PC-3 (cell line): ENCODE measurements at regions of chr9 and their contacts with region 1.

Region 1: GRCh38 chr9:72526901-72527800 is 5.7 kb downstream of the TMC1 start:
- DNase-seq: peak; percentile 84
- ATAC-seq: peak; percentile 74
- H3K4me3 ChIP-seq: peak overlapping the region; percentile 50
- H3K27ac ChIP-seq: peak overlapping the region; percentile 73
- H3K4me1 ChIP-seq: peaks cover 39% of the 10 kb centered on the region
- H3K27me3 ChIP-seq: no peaks in the 10 kb centered on the region
- CTCF ChIP-seq: no peak

Region 2: DNA sequence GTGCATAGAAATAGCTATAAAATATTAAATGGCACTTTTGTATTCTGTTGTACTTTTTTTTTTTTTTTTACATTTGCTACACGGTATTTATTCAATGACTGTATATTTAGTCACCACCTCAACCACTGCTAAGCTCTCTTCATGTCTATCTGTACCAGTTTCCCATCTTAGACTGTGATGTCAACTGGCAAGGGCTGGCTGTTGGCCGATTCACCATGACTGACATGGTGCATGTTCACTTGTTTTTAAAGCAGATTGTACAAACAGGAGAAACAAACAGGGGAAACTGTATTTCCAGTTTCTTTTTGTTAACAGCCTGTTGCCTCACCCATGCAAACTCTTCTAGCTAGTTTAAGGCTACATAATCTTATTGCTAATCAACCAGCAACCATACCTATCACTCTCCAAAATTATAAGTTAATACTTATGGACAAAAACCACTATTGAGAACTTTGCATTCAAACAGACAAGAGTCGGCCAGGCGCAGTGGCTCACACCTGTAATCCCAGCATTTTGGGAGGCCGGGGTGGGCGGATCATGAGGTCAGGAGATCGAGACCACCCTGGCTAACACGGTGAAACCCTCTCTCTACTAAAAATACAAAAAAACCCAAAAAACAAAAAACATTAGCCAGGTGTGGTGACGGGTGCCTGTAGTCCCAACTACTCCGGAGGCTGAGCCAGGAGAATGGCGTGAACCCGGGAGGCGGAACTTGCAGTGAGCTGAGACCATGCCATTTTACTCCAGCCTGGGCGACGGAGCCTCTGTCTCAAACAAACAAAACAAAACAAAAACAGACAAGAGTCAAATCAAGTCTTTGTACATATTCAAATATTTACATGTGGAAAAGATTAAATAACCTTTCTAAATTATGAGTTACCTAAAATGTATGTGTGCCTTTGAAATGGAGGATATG is 175.4 kb before region 1 on chr9:
- CTCF ChIA-PET with region 1: no interaction called
- POLR2A ChIA-PET with region 1: interaction called, 11 read pairs
- intact Hi-C with region 1: no loop called
- DNase-seq: peak; percentile 84
- ATAC-seq: peak; percentile 99
- H3K4me3 ChIP-seq: no peak overlapping the region
- H3K27ac ChIP-seq: peak overlapping the region; percentile 39
- H3K4me1 ChIP-seq: peaks cover 20% of the 10 kb centered on the region
- H3K27me3 ChIP-seq: no peaks in the 10 kb centered on the region
- CTCF ChIP-seq: no peak

Region 3: DNA sequence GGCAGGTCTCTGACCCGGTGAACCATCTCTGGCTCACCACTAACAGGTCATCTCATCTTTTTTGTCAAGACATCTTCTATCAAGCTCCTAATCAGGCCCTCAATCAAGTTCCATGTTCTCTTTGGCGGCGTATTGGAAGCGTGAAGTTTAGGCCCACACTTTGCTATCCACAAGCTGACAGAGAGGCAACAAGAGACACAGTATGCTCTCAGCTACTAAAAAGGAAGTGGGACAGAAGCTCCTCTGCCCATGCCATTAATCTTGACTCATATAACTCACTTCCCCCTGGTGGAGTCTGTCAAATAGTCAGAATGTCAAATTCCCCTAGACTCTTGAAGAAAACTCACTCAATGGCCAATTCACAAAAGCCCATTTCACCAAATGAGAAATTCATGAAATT is 83.3 kb before region 1 on chr9:
- CTCF ChIA-PET with region 1: no interaction called
- POLR2A ChIA-PET with region 1: no interaction called
- intact Hi-C with region 1: loop called (anchors 1 kb)
- DNase-seq: peak; percentile 57
- ATAC-seq: peak; percentile 41
- H3K4me3 ChIP-seq: no peak overlapping the region
- H3K27ac ChIP-seq: peak overlapping the region; percentile 83
- H3K4me1 ChIP-seq: peaks cover 55% of the 10 kb centered on the region
- H3K27me3 ChIP-seq: no peaks in the 10 kb centered on the region
- CTCF ChIP-seq: no peak

Region 4: GRCh38 chr9:72557549-72557948 is 30.4 kb after region 1 on chr9:
- CTCF ChIA-PET with region 1: no interaction called
- POLR2A ChIA-PET with region 1: no interaction called
- intact Hi-C with region 1: loop called (anchors 2 kb)
- DNase-seq: peak; percentile 94
- ATAC-seq: peak; percentile 89
- H3K4me3 ChIP-seq: no peak overlapping the region
- H3K27ac ChIP-seq: peak overlapping the region; percentile 78
- H3K4me1 ChIP-seq: peaks cover 31% of the 10 kb centered on the region
- H3K27me3 ChIP-seq: no peaks in the 10 kb centered on the region
- CTCF ChIP-seq: no peak

Region 5: GRCh38 chr9:72592502-72593403 is 65.6 kb after region 1 on chr9:
- CTCF ChIA-PET with region 1: no interaction called
- POLR2A ChIA-PET with region 1: no interaction called
- intact Hi-C with region 1: loop called (anchors 1 kb)
- DNase-seq: peak; percentile 66
- ATAC-seq: peak; percentile 75
- H3K4me3 ChIP-seq: no peak overlapping the region
- H3K27ac ChIP-seq: no peak overlapping the region
- H3K4me1 ChIP-seq: peaks cover 4% of the 10 kb centered on the region; the same call in 1 of the 2 replicates
- H3K27me3 ChIP-seq: no peaks in the 10 kb centered on the region
- CTCF ChIP-seq: peak; percentile 81